ENCODE measurements at regions of chr1 and their contacts with region 1.

Region 1: DNA sequence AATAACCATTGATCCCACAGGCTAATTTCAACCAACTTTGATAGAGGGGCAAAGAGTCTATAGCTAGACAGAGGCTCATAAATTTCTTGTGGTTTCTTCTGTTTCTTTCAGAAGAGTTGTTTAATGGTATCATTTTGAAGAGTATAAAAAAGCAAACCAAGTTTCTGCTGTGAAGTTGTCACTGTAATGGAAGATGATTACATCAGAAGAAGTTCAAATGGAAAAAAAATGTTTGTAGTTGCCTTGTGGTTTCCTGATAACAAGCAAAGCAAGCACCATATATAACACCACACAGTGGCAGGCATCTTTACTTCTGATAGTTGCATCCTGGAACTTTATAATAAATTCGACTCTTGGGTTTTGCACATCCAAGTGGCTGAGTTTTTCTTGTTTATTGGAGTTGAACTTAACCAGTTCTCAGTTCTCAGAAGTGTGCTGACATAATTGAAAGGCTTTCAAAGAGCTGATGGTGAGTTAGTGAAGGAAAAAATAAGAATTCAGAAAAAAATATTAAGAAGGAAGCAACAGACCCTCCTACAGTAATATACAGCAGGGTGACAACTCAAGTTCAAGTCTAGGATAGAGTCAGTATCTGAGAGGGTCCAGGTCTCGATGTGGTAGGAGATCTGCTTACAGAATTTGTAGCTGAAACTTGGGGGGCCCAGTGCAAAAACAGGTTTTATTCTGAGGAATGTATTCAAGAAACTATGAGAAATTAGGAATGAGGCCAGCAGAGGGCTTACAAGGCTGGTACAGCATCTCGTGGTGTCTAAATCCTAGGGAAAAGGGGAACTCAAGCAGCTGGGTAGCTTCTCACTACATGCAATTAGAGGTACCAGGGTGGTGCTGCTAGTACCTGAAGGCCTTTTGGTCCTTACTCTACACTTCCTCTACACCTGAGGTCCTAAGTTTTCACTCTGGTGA is 123.5 kb downstream of the CRB1 start:
- DNase-seq: peak in 4 of 14 experiments; percentile 3 to 79 (median 74)
- ATAC-seq: peak; percentile 85
- H3K4me3 ChIP-seq: no peak overlapping the region
- H3K4me3 Mint-ChIP-seq: peak overlapping the region; percentile 57
- H3K27ac ChIP-seq: peak overlapping the region in 1 of 2 donors; percentile 26
- H3K27ac Mint-ChIP-seq: peak overlapping the region; percentile 89
- H3K4me1 ChIP-seq: peaks cover 13% of the 10 kb centered on the region
- H3K4me1 Mint-ChIP-seq: peaks cover 50% of the 10 kb centered on the region
- H3K27me3 ChIP-seq: no peaks in the 10 kb centered on the region
- H3K27me3 Mint-ChIP-seq: no peaks in the 10 kb centered on the region
- CTCF ChIP-seq: no peak

Region 2: DNA sequence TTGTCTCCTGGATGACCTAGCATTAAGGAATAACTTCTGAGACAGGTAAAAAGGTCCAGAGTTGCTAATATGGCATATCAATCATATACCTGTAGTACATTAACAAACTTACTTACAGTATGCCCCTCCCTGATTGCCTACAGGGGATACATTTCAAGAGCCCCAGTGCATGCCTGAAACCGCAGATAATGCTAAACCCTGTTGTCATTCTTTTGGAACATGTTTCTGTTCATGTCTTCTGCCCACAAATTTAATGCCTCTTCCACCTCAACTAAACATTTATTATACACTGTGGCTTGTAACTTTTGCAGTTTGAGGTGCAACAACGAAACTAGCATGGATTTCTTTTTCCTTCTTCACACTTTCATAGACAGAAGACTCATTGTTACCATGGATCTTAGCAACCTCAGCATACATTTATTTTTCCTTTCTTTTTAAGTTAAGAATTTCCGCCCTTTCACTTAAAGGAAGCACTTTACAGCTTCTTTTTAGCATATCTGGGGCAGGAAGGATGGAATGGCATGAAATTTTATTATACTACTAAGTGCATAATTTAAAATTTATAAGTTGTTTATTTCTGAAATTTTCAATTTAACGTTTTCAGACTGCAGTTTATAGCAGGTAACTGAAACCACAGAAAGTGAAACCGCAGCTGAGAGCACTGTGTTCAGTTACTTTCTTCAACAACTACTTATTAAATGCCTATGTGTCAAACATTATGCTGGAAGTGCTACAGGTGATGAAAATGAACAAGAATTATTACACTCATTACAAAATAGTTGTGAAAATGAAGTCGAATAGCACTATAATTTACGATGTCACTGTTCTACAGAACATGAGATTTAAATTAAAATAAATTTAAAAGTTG is 349.8 kb before region 1 on chr1:
- CTCF ChIA-PET with region 1: no interaction called
- POLR2A ChIA-PET with region 1: no interaction called
- intact Hi-C with region 1: no loop called
- DNase-seq: no peak
- ATAC-seq: no peak
- H3K4me3 ChIP-seq: no peak overlapping the region
- H3K4me3 Mint-ChIP-seq: no peak overlapping the region
- H3K27ac ChIP-seq: no peak overlapping the region
- H3K27ac Mint-ChIP-seq: no peak overlapping the region
- H3K4me1 ChIP-seq: no peaks in the 10 kb centered on the region
- H3K4me1 Mint-ChIP-seq: no peaks in the 10 kb centered on the region
- H3K27me3 ChIP-seq: no peaks in the 10 kb centered on the region
- H3K27me3 Mint-ChIP-seq: peaks cover 20% of the 10 kb centered on the region
- CTCF ChIP-seq: no peak

Region 3: GRCh38 chr1:197441990-197442389 is 50.4 kb after region 1 on chr1:
- CTCF ChIA-PET with region 1: no interaction called
- POLR2A ChIA-PET with region 1: no interaction called
- intact Hi-C with region 1: loop called in 1 of 2 experiments (anchors 10 kb)
- DNase-seq: no peak
- ATAC-seq: no peak
- H3K4me3 ChIP-seq: no peak overlapping the region
- H3K4me3 Mint-ChIP-seq: no peak overlapping the region
- H3K27ac ChIP-seq: no peak overlapping the region
- H3K27ac Mint-ChIP-seq: no peak overlapping the region
- H3K4me1 ChIP-seq: no peaks in the 10 kb centered on the region
- H3K4me1 Mint-ChIP-seq: no peaks in the 10 kb centered on the region
- H3K27me3 ChIP-seq: no peaks in the 10 kb centered on the region
- H3K27me3 Mint-ChIP-seq: no peaks in the 10 kb centered on the region
- CTCF ChIP-seq: no peak

Region 4: DNA sequence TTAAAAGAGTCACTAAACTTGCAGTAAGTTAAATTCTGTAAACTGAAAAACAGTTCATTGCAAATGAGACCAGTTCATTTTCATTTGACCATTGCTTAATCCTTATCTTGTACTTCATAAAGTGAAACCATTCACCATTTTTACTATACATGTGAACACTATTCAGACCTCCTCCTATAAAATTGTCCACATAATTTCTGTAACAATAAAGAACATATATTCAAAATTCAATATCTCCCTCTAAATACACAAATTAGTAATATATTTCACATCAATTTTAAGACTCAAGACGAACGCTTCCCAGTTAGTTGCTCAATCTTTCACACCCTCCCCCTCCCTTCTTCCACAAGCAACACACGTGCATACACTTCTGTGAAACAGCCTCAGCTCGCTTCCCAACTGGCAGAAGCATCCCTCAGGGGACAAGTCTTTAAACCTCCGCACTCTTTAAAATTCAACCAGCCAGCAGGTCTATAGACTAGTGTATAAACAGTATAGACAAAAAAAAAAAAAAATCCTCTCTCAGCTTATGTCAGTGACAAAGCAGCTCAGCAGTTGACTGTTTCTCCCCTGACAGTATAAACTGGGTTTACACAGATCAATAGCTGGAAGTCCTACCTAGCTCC is 284.1 kb after region 1 on chr1:
- CTCF ChIA-PET with region 1: no interaction called
- POLR2A ChIA-PET with region 1: no interaction called
- intact Hi-C with region 1: no loop called
- DNase-seq: no peak
- ATAC-seq: no peak
- H3K4me3 ChIP-seq: no peak overlapping the region
- H3K4me3 Mint-ChIP-seq: no peak overlapping the region
- H3K27ac ChIP-seq: no peak overlapping the region
- H3K27ac Mint-ChIP-seq: no peak overlapping the region
- H3K4me1 ChIP-seq: no peaks in the 10 kb centered on the region
- H3K4me1 Mint-ChIP-seq: peaks cover 32% of the 10 kb centered on the region
- H3K27me3 ChIP-seq: no peaks in the 10 kb centered on the region
- H3K27me3 Mint-ChIP-seq: no peaks in the 10 kb centered on the region
- CTCF ChIP-seq: no peak

Measured in CD4-positive, alpha-beta T cell (primary cell).